ENCODE measurements at regions of chr14 and their contacts with region 1.

Region 1: DNA sequence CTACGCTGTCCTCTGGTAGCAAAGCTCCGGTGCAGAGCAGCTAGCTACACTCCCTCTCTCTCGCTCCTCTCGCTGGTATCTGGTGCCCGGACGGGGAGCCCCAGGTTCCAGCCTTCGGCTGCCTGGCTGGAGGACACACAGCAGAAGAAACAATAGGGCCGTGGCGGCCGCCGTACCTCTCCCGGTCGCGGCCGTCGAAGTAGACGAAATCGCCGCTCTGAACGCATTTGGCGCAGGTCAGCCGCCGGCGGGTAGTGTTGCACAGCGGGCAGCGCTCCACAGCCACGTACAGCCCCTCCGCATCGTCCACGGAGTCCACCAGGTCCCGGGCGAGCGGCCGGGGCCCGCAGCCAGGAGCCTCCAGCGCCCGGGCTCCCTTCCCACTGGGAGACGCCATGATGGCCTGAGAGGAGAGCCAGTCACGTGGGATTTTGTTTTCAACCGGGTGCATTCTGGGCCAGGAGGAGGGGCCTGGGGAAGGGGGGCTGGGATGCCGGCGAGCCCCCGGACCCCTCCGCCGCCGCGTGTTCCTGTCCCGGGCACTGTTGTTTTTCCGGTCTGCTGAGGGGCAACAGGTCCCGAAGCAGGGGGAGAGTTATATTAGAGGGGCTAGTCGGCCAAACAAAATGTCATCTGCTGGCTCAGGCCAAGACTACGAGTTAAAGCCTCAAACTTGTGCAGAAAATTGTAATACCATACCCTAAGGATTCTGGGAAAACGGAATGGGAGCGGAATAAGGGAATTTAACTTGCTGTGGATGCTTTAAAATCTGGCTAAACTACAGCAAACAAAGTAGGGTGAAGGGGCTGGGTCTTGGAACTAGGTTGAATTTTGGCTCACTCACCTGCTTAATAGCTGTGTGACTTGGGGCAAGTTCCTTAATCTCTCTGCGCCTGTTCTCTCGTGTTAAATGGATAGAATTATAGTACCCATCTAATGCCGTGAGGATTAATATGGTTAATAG is at the start of gene ATG14:
- DNase-seq: peak; percentile 83
- H3K4me3 Mint-ChIP-seq: peak within 1 kb of the TSS; percentile 85
- H3K27ac Mint-ChIP-seq: peak within 1 kb of the TSS; percentile 96
- H3K4me1 Mint-ChIP-seq: peaks cover 23% of the 10 kb centered on the region
- H3K27me3 Mint-ChIP-seq: peaks cover 20% of the 10 kb centered on the region
- CTCF ChIP-seq: no peak
- total RNA-seq, gene ATG14: 6.5 and 6.6 TPM in 2 replicates

Region 2: DNA sequence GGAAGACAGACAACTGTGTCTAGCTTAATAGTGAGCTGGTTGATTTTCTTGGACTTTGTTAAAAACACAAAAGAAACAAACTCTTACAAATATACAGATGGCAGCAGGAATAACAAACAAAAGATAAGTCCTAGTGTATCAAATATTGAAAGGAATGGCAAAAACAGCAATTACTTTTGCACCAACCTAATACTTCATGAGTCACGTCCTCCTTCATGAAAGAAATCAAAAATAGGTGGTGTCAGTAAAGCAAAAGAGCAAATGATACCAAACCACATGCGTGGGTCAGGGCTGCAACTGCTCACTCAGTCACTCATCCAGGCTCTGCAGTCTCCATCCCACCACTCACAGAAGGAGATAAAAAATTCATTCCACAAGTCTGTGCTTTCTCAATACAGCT is 11.9 kb before region 1 on chr14:
- CTCF ChIA-PET with region 1: no interaction called
- POLR2A ChIA-PET with region 1: interaction called, 16 read pairs
- intact Hi-C with region 1: no loop called
- DNase-seq: no peak
- H3K4me3 Mint-ChIP-seq: no peak overlapping the region
- H3K27ac Mint-ChIP-seq: no peak overlapping the region
- H3K4me1 Mint-ChIP-seq: peaks cover 8% of the 10 kb centered on the region
- H3K27me3 Mint-ChIP-seq: no peaks in the 10 kb centered on the region
- CTCF ChIP-seq: no peak

Region 3: DNA sequence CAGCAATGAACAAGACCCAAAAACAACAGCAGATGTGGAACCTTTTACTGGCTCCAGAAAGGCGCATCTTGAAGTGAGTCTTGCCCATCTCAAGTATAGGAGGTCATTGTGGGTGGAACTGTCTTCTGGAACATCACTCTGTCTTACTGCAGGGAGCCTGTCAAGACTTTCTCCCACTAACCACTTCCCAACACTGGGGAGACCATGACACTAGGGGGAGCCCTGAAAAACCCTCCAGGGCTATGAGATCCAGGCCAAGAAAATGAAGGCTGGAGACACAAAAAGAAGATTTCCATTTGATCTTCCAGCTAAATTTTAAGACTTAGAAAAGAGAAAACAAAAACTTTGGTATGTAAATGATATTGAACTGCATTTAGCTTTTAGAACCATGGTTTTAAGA is 13.4 kb after region 1 on chr14:
- CTCF ChIA-PET with region 1: interaction called, 38 read pairs
- POLR2A ChIA-PET with region 1: interaction called, 22 read pairs
- intact Hi-C with region 1: no loop called
- DNase-seq: peak; percentile 3
- H3K4me3 Mint-ChIP-seq: no peak overlapping the region
- H3K27ac Mint-ChIP-seq: no peak overlapping the region
- H3K4me1 Mint-ChIP-seq: peaks cover 16% of the 10 kb centered on the region
- H3K27me3 Mint-ChIP-seq: no peaks in the 10 kb centered on the region
- CTCF ChIP-seq: no peak

Region 4: GRCh38 chr14:55454264-55455002 is 42.7 kb after region 1 on chr14:
- CTCF ChIA-PET with region 1: no interaction called
- POLR2A ChIA-PET with region 1: no interaction called
- intact Hi-C with region 1: no loop called
- DNase-seq: peak; percentile 89
- H3K4me3 Mint-ChIP-seq: peak overlapping the region; percentile 21
- H3K27ac Mint-ChIP-seq: no peak overlapping the region
- H3K4me1 Mint-ChIP-seq: peaks cover 42% of the 10 kb centered on the region
- H3K27me3 Mint-ChIP-seq: no peaks in the 10 kb centered on the region
- CTCF ChIP-seq: no peak

Region 5: GRCh38 chr14:55477680-55478079 is 66.0 kb after region 1 on chr14:
- CTCF ChIA-PET with region 1: no interaction called
- POLR2A ChIA-PET with region 1: no interaction called
- intact Hi-C with region 1: no loop called
- DNase-seq: no peak
- H3K4me3 Mint-ChIP-seq: no peak overlapping the region
- H3K27ac Mint-ChIP-seq: no peak overlapping the region
- H3K4me1 Mint-ChIP-seq: peaks cover 2% of the 10 kb centered on the region
- H3K27me3 Mint-ChIP-seq: no peaks in the 10 kb centered on the region
- CTCF ChIP-seq: no peak

Region 6: DNA sequence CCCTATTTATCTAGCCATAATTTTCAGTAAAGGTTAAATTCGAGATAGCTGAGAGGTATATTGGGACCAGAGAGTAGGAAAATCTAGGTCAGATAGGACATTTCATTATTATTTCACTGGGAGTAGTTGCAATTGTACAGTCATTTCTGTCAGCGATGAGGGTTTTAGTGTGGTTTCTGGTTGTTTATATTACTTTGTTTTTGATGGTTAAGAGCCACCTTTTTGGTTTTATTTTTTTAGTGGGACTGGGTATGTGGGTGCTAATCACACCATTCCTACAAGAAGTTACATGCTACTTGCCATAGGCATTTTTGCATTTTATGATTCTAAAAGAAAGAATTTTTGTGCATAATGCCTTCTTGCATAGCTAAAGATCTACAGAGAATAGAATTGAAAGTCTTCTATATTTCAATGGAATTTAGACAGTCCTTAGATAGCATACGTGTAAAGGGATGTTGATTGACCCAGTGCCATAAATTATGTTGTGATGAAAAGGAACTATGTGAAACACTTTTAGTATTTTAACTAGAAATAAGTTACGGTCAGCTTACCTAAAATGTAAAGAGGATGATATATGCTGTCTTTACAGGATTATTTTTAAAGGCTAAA is 253.5 kb after region 1 on chr14:
- CTCF ChIA-PET with region 1: no interaction called
- POLR2A ChIA-PET with region 1: no interaction called
- intact Hi-C with region 1: no loop called
- DNase-seq: no peak
- H3K4me3 Mint-ChIP-seq: no peak overlapping the region
- H3K27ac Mint-ChIP-seq: no peak overlapping the region
- H3K4me1 Mint-ChIP-seq: no peaks in the 10 kb centered on the region
- H3K27me3 Mint-ChIP-seq: no peaks in the 10 kb centered on the region
- CTCF ChIP-seq: no peak